Activated CD8-positive, alpha-beta T cell treated with anti-CD3 and anti-CD28 coated beads, Interleukin-2, amount 10 ng/mL, durations not matched to agents 7 days and 5 days (primary cell): ENCODE measurements at regions of chr1 and their contacts with region 1.

Region 1: GRCh38 chr1:43414634-43415223 is 25.0 kb downstream of the SZT2 start:
- DNase-seq: peak; percentile 75
- ATAC-seq: peak; percentile 82
- H3K4me3 Mint-ChIP-seq: no peak overlapping the region
- H3K27ac Mint-ChIP-seq: no peak overlapping the region
- H3K4me1 Mint-ChIP-seq: no peaks in the 10 kb centered on the region
- H3K27me3 Mint-ChIP-seq: no peaks in the 10 kb centered on the region

Region 2: DNA sequence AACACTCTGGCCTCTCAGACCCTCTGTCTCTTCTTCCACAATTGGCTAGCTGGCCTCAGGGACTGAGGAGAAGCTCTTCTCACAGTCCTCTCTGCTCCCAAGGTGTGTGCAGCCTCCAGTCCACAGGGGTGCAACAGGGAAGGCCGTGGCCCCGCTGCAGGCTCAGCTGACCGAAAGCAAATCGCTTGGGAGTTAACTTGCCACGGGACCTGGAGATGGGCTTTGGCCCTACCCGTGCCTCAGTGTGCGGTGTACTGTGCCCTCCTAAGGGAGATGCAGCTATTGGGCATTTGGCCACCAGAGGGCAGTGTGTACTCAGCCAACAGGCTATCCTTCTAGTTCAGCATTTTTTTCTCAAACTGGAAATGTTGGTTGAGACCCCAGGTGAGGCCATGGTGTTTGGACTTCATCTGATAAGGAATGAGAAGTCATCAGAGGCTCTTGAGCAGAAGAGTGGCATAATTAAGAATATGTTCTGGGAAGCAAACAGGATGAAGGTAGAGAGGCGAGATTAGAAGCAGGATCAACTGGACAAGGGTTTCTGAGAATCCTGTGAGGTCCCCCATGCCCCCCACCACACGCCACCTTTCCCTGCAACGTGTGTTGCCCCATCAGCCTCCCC is 187.5 kb before region 1 on chr1:
- CTCF ChIA-PET with region 1: interaction called, 85 read pairs
- POLR2A ChIA-PET with region 1: interaction called, 3 read pairs
- DNase-seq: peak; percentile 90
- ATAC-seq: peak; percentile 87
- H3K4me3 Mint-ChIP-seq: no peak overlapping the region
- H3K27ac Mint-ChIP-seq: no peak overlapping the region
- H3K4me1 Mint-ChIP-seq: no peaks in the 10 kb centered on the region
- H3K27me3 Mint-ChIP-seq: peaks cover 2% of the 10 kb centered on the region

Region 3: GRCh38 chr1:43238085-43238484 is 176.6 kb before region 1 on chr1:
- CTCF ChIA-PET with region 1: interaction called, 47 read pairs
- POLR2A ChIA-PET with region 1: no interaction called
- DNase-seq: peak; percentile 63
- ATAC-seq: no peak
- H3K4me3 Mint-ChIP-seq: no peak overlapping the region
- H3K27ac Mint-ChIP-seq: no peak overlapping the region
- H3K4me1 Mint-ChIP-seq: peaks cover 10% of the 10 kb centered on the region
- H3K27me3 Mint-ChIP-seq: peaks cover 4% of the 10 kb centered on the region

Region 4: GRCh38 chr1:43389326-43390313 is 25.1 kb before region 1 on chr1 and contains the starts of genes MED8 and SZT2:
- CTCF ChIA-PET with region 1: interaction called, 14 read pairs
- POLR2A ChIA-PET with region 1: interaction called, 3 read pairs
- DNase-seq: peak; percentile 95
- ATAC-seq: peak; percentile 96
- H3K4me3 Mint-ChIP-seq: peak within 1 kb of the TSS; percentile 100
- H3K27ac Mint-ChIP-seq: peak within 1 kb of the TSS; percentile 96
- H3K4me1 Mint-ChIP-seq: peaks cover 33% of the 10 kb centered on the region
- H3K27me3 Mint-ChIP-seq: no peaks in the 10 kb centered on the region
- total RNA-seq, gene MED8: 33.1 to 35.1 TPM
- total RNA-seq, gene SZT2: 57.2 to 58.3 TPM

Region 5: GRCh38 chr1:43398227-43398626 is 16.5 kb before region 1 on chr1:
- CTCF ChIA-PET with region 1: interaction called, 21 read pairs
- POLR2A ChIA-PET with region 1: interaction called, 3 read pairs
- DNase-seq: no peak
- ATAC-seq: no peak
- H3K4me3 Mint-ChIP-seq: no peak overlapping the region
- H3K27ac Mint-ChIP-seq: no peak overlapping the region
- H3K4me1 Mint-ChIP-seq: no peaks in the 10 kb centered on the region
- H3K27me3 Mint-ChIP-seq: no peaks in the 10 kb centered on the region

Region 6: GRCh38 chr1:43435146-43436145 is 20.7 kb after region 1 on chr1:
- CTCF ChIA-PET with region 1: no interaction called
- POLR2A ChIA-PET with region 1: no interaction called
- DNase-seq: no peak
- ATAC-seq: no peak
- H3K4me3 Mint-ChIP-seq: no peak overlapping the region
- H3K27ac Mint-ChIP-seq: no peak overlapping the region
- H3K4me1 Mint-ChIP-seq: no peaks in the 10 kb centered on the region
- H3K27me3 Mint-ChIP-seq: no peaks in the 10 kb centered on the region